ENCODE measurements at regions of chr11 and their contacts with region 1.

Region 1: DNA sequence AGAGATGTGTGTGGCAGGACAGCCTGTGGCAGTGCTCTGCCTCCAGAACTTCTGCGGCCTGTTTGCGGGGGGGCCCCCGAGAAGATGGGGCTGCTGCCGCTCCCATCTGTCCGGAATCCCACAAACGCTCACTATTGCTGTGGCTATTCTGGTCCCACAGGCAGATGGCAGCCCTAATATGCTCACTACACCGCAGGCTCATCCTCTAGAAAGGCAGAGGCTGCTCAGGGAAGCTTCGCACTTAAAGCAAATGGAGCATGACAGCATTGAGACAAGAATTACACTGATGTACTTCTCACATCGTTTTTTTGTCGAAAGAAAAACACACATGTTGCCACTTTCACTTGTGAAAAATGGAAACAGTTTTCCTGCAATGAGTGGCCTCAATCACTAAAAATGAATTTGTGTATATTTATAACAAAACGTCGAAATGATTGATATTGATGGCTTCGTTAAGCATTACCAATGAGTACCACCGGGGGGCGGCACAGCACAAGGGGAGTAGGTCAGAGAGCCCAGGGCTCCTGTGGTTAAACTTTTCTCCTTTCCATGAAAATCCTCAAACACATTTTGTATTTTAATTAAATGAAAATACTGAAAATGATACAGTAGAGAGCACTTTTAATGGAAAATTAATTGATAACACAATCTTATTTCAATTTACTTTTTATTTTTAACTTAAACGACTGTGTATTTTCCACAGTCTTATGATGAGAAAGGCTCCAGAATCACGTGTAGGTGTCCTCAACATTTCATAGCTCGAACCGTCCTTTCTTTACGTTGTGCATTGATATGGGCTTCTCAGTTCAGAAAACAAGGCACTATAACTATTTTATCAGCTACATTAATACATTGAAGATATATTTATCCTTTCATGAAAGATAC is 69.1 kb downstream of the CTTN start:
- DNase-seq: peak; percentile 85
- H3K4me3 ChIP-seq: peak overlapping the region in 1 of 2 experiments; percentile 38; a peak in 1 of 4 replicates
- H3K27ac ChIP-seq: no peak overlapping the region
- H3K4me1 ChIP-seq: no peaks in the 10 kb centered on the region; a peak in 1 of 4 replicates
- H3K27me3 ChIP-seq: no peaks in the 10 kb centered on the region
- CTCF ChIP-seq: peak; percentile 68
- EP300 ChIP-seq: no peak
- RAD21 ChIP-seq: peak; percentile 99

Region 2: DNA sequence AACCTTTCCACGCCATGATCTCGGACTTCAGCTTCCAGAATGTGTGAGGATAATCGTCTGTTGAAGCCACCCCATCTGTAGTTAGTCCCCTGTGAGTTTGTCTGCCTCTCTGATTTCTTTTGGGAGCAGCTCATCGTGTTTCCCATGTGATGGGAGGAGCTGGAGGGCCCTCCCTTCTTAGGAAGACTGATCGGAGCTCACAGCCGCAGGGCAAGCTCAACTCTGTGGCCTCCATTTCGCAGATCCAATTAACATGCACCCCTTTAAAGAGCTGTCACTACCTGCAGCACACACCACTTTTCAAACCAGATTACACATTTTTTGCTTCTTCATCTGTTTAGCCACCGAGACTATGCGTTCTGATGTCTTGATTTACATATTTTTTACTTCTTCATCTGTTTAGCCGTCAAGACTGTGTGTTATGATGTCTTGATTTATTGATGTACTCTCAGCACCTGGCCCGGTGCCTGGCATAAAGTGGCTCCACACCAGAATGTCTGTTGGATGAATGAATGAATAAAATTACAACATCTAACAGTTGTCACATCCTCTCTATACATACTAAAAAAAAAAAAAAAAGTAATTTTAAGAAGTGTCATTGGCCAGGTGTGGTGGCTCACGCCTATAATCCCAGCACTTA is 211.8 kb before region 1 on chr11:
- CTCF ChIA-PET with region 1: no interaction called
- POLR2A ChIA-PET with region 1: no interaction called
- DNase-seq: no peak
- H3K4me3 ChIP-seq: no peak overlapping the region
- H3K27ac ChIP-seq: no peak overlapping the region
- H3K4me1 ChIP-seq: no peaks in the 10 kb centered on the region
- H3K27me3 ChIP-seq: no peaks in the 10 kb centered on the region
- CTCF ChIP-seq: no peak
- EP300 ChIP-seq: no peak
- RAD21 ChIP-seq: no peak

Region 3: DNA sequence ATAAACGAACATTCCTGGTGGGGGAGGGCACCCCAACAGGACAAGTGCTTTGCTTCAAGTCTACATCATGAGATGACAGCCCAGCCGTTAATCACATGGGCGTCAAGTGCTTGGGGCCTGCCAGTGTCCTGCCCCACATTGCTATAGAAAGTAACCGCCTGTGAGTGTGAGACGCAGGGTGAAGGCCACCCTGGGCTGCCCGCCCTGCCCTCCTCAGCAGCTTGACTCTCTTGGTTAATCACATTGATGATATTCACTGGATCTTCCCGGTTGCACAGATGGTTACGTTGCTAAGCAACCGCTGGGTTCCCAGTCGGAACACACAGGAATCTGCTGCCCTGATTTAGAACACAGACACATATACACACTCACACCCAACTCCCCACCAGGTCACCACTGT is 10.2 kb after region 1 on chr11:
- CTCF ChIA-PET with region 1: interaction called, 27 read pairs
- POLR2A ChIA-PET with region 1: no interaction called
- DNase-seq: peak; percentile 79
- H3K4me3 ChIP-seq: no peak overlapping the region
- H3K27ac ChIP-seq: no peak overlapping the region; a peak in 1 of 4 replicates
- H3K4me1 ChIP-seq: peaks cover 0 to 20% of the 10 kb centered on the region in 2 experiments; a peak in 2 of 4 replicates
- H3K27me3 ChIP-seq: no peaks in the 10 kb centered on the region
- CTCF ChIP-seq: no peak
- EP300 ChIP-seq: no peak
- RAD21 ChIP-seq: no peak

Region 4: GRCh38 chr11:70641369-70641768 is 173.9 kb after region 1 on chr11:
- CTCF ChIA-PET with region 1: no interaction called
- POLR2A ChIA-PET with region 1: no interaction called
- DNase-seq: peak; percentile 88
- H3K4me3 ChIP-seq: no peak overlapping the region
- H3K27ac ChIP-seq: peak overlapping the region in 1 of 2 experiments; percentile 84; a peak in 2 of 4 replicates
- H3K4me1 ChIP-seq: peaks cover 0 to 33% of the 10 kb centered on the region in 2 experiments; a peak in 1 of 4 replicates
- H3K27me3 ChIP-seq: no peaks in the 10 kb centered on the region
- CTCF ChIP-seq: no peak
- EP300 ChIP-seq: 0 out of 4 replicates have a peak, but pooled peaks of 1 of the 2 experiments have one; percentile 37
- RAD21 ChIP-seq: no peak; the same call in 1 of the 2 replicates

Measured in SK-N-SH (cell line).